ENCODE measurements at regions of chr19 and their contacts with region 1.

Region 1: GRCh38 chr19:49097455-49098288 is 12.4 kb downstream of the SNRNP70 start:
- DNase-seq: peak; percentile 83 to 88
- H3K4me3 ChIP-seq: no peak overlapping the region
- H3K4me3 Mint-ChIP-seq: no peak overlapping the region
- H3K27ac Mint-ChIP-seq: no peak overlapping the region
- H3K4me1 ChIP-seq: no peaks in the 10 kb centered on the region; the same call in 1 of the 2 replicates
- H3K4me1 Mint-ChIP-seq: peaks cover 15% of the 10 kb centered on the region
- H3K27me3 ChIP-seq: no peaks in the 10 kb centered on the region
- H3K27me3 Mint-ChIP-seq: no peaks in the 10 kb centered on the region
- CTCF ChIP-seq: peak; percentile 98 to 99

Region 2: DNA sequence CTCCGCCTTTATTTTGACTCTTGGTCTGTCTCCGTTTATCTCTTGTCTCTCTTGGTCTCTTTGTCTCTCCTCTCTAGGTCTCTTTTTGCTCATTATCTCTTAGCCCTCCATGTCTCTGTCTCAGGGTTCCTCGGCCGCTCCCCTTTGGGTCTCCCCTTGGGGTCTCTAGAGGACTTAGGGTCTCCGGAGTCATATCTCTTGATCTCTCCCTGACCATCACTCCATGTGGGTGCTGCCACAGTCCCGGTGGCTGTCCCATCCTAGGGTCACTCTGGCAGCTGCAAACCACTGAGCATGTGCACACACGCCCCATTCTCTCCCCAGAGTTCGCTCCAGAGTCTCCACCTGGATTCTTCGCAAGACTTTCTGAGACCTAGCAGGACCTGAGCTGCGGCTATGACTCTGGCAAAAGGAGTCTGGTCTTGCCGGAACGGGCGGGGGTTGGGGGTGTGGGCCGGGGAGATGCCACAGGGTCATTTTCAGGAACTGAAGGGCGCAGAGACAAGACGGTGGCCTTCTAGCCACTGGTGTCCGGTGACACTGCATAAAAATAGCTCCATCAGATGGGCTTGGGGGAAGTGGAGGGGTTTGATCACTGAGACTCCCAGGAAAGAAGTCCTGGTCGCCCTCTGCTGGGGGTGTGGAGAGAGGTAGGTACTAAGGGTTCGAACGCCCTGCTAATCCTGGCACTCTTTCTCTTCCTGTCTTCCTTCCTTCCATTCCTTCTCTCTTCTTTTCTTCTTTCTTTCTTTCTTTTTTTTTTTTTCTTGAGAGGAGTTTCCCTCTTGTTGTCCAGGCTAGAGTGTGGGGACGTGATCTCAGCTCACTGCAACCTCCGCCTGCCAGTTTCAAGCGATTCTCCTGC is 23.9 kb before region 1 on chr19:
- CTCF ChIA-PET with region 1: interaction called, 14 read pairs
- POLR2A ChIA-PET with region 1: no interaction called
- intact Hi-C with region 1: no loop called
- DNase-seq: peak; percentile 59 to 72
- H3K4me3 ChIP-seq: no peak overlapping the region
- H3K4me3 Mint-ChIP-seq: peak overlapping the region; percentile 78
- H3K27ac Mint-ChIP-seq: peak overlapping the region; percentile 60
- H3K4me1 ChIP-seq: peaks cover 11% of the 10 kb centered on the region
- H3K4me1 Mint-ChIP-seq: peaks cover 17% of the 10 kb centered on the region
- H3K27me3 ChIP-seq: no peaks in the 10 kb centered on the region
- H3K27me3 Mint-ChIP-seq: no peaks in the 10 kb centered on the region
- CTCF ChIP-seq: peak; percentile 44 to 53

Region 3: DNA sequence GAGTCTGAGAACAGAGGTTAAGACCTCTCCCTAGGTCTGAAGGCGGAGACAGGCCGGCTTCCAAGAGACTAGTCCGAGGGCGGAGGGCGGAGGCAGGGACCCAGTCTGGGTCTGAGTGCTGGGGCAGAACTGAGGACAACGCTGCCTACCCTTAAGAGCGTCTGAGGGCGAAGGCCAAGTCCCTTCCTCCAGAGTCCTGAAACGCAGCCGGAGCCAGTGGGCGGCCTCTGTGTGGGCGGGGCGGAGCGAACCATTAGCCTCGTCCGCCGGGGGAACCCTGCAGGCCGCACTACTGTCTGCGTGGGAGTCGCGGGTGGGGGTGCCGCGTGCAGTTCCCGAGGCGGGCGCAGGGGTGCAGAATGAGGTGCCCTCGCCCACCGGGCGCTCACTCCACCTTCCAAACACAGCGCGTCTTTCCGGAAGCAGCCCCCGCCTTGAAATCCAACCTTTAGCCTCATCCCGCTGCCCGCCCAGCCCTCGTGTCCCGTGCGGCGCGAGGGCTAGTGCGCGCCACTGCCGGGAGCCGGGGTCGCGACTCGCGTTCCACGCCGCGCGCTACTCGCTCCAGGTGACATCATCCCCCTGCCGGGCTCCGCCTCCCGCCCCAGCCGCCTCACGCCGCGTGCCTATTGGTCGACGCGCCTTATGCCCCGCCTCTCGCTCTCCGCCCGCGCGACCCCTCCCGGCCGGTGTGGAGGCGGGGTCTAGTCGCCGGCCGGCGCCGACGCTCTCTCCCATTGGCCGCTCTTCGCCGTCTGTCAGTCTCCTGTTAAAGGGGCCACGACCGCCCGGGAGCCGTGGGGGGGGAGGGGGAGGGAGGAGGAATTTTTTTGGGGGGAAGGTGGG is 21.1 kb after region 1 on chr19 and contains the start of gene C19orf73:
- CTCF ChIA-PET with region 1: interaction called, 54 read pairs
- POLR2A ChIA-PET with region 1: interaction called, 5 read pairs
- intact Hi-C with region 1: no loop called
- DNase-seq: peak; percentile 94 to 98
- H3K4me3 ChIP-seq: peak within 1 kb of the TSS; percentile 88
- H3K4me3 Mint-ChIP-seq: peak within 1 kb of the TSS; percentile 94
- H3K27ac Mint-ChIP-seq: peak within 1 kb of the TSS; percentile 85
- H3K4me1 ChIP-seq: peaks cover 18% of the 10 kb centered on the region
- H3K4me1 Mint-ChIP-seq: peaks cover 32% of the 10 kb centered on the region
- H3K27me3 ChIP-seq: no peaks in the 10 kb centered on the region
- H3K27me3 Mint-ChIP-seq: peaks cover 4% of the 10 kb centered on the region
- CTCF ChIP-seq: no peak
- total RNA-seq, gene C19orf73: 1.7 and 2.1 TPM in 2 replicates

Region 4: GRCh38 chr19:49148784-49149651 is 51.3 kb after region 1 on chr19:
- CTCF ChIA-PET with region 1: interaction called, 32 read pairs
- POLR2A ChIA-PET with region 1: interaction called, 4 read pairs
- intact Hi-C with region 1: loop called (anchors 5 kb)
- DNase-seq: peak; percentile 100
- H3K4me3 ChIP-seq: peak overlapping the region; percentile 69
- H3K4me3 Mint-ChIP-seq: peak overlapping the region; percentile 91
- H3K27ac Mint-ChIP-seq: peak overlapping the region; percentile 61
- H3K4me1 ChIP-seq: peaks cover 13% of the 10 kb centered on the region
- H3K4me1 Mint-ChIP-seq: peaks cover 30% of the 10 kb centered on the region
- H3K27me3 ChIP-seq: no peaks in the 10 kb centered on the region
- H3K27me3 Mint-ChIP-seq: no peaks in the 10 kb centered on the region
- CTCF ChIP-seq: no peak

Region 5: GRCh38 chr19:49210108-49210900 is 112.6 kb after region 1 on chr19:
- CTCF ChIA-PET with region 1: interaction called, 18 read pairs
- POLR2A ChIA-PET with region 1: no interaction called
- intact Hi-C with region 1: no loop called
- DNase-seq: peak; percentile 33 to 57
- H3K4me3 ChIP-seq: no peak overlapping the region
- H3K4me3 Mint-ChIP-seq: no peak overlapping the region
- H3K27ac Mint-ChIP-seq: no peak overlapping the region
- H3K4me1 ChIP-seq: no peaks in the 10 kb centered on the region
- H3K4me1 Mint-ChIP-seq: peaks cover 12% of the 10 kb centered on the region
- H3K27me3 ChIP-seq: no peaks in the 10 kb centered on the region
- H3K27me3 Mint-ChIP-seq: no peaks in the 10 kb centered on the region
- CTCF ChIP-seq: no peak

Measured in Caco-2 (cell line).